MCF 10A (cell line): ENCODE measurements at regions of chr16 and their contacts with region 1.

Region 1: GRCh38 chr16:66580605-66581209 is 1.4 kb downstream of the CMTM2 start:
- DNase-seq: peak; percentile 85
- H3K4me3 Mint-ChIP-seq: no peak overlapping the region
- H3K27ac Mint-ChIP-seq: peak overlapping the region; percentile 32
- H3K4me1 Mint-ChIP-seq: peaks cover 22% of the 10 kb centered on the region
- H3K27me3 Mint-ChIP-seq: no peaks in the 10 kb centered on the region
- CTCF ChIP-seq: no peak

Region 2: GRCh38 chr16:66562407-66562806 is 18.3 kb before region 1 on chr16:
- CTCF ChIA-PET with region 1: interaction called, 19 read pairs
- POLR2A ChIA-PET with region 1: interaction called, 3 read pairs
- intact Hi-C with region 1: no loop called
- DNase-seq: no peak
- H3K4me3 Mint-ChIP-seq: no peak overlapping the region
- H3K27ac Mint-ChIP-seq: no peak overlapping the region
- H3K4me1 Mint-ChIP-seq: no peaks in the 10 kb centered on the region
- H3K27me3 Mint-ChIP-seq: no peaks in the 10 kb centered on the region
- CTCF ChIP-seq: peak; percentile 24

Region 3: DNA sequence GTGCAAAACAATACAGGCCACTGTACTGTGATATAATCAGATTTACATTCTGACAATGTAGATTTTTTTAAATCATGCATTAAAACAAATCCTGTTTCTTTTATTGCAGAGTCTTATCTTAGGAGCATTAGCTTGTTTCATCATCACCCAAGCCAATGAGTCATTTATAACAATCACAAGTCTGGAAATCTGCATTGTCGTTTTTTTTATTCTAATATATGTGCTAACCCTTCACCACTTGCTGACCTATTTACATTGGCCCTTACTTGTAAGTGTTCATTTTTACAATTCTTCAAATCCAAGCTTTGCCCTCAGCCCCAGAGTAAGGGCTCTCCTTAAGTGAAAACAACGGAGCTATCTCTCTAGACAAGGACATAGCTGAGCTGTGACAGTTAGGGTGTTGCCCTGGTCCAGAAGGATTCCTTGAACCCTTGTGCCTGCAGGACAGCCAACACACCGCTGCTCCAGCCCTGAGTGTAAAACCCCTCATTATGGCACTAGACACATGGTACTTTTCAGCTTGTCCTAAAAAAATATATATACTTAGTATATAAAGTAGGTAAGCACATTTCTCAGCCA is 10.8 kb before region 1 on chr16:
- CTCF ChIA-PET with region 1: interaction called, 3 read pairs
- POLR2A ChIA-PET with region 1: interaction called, 23 read pairs
- intact Hi-C with region 1: no loop called
- DNase-seq: peak; percentile 68
- H3K4me3 Mint-ChIP-seq: no peak overlapping the region
- H3K27ac Mint-ChIP-seq: peak overlapping the region; percentile 32
- H3K4me1 Mint-ChIP-seq: peaks cover 16% of the 10 kb centered on the region
- H3K27me3 Mint-ChIP-seq: no peaks in the 10 kb centered on the region
- CTCF ChIP-seq: no peak